HEK293 (cell line): ENCODE measurements at regions of chr1 and their contacts with region 1.

Region 1: GRCh38 chr1:85109475-85109874 is 61.2 kb upstream of the MCOLN3 start:
- H3K4me3 ChIP-seq: no peak overlapping the region
- H3K27ac ChIP-seq: no peak overlapping the region
- H3K4me1 ChIP-seq: no peaks in the 10 kb centered on the region
- CTCF ChIP-seq: peak; percentile 74

Region 2: DNA sequence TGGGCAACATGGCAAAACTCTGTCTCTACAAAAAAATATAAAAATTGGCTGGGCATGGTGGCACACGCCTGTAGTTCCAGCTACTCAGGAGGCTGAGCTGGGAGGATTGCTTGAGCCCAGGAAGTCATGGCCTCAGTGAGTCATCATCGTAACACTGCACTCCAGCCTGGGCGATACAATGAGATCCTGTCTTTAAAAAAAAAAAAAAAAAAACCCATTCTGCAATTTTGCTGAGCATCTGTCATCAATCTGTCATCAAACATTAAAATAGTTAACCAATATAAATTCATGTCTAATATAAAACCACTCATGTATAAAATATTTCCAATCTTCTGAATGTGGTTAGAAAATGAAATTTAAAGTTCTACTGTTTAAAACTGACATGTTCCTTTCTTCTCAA is 273.3 kb before region 1 on chr1:
- CTCF ChIA-PET with region 1: no interaction called
- POLR2A ChIA-PET with region 1: no interaction called
- H3K4me3 ChIP-seq: no peak overlapping the region
- H3K27ac ChIP-seq: no peak overlapping the region
- H3K4me1 ChIP-seq: peaks cover 8% of the 10 kb centered on the region; the same call in 1 of the 2 replicates
- CTCF ChIP-seq: no peak

Region 3: DNA sequence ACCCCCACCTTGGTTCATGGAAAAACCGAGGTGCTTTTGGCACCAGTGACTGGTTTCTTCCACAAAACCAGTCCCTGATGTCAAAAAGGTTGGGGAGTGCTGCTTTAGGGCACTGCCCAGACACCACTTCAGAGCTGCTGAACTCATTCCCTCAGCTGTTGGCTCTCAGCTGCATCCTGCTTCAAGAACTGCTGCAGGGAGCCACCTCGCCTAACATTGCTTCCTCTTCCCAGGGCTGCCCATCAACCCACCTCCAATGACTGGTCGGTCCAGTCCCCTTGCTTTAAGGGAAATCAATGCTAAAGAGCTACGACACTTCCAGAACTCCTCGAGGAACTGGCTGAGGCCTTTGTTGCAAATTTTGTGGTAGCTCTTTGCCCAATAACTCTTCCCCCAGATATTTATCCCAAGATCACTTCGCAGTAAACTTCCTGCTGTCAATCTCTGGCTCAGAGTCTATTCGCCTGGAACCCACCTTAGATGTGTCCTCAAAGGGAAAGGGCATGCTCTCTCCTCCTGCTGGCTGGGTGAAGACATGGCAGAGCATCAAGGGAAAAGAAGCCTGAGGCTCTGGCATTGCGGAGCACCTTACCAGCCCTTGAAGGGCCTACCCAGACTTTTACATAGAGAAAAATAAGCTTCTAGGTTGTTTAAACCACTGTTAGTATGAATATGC is 121.0 kb after region 1 on chr1:
- CTCF ChIA-PET with region 1: interaction called, 18 read pairs
- POLR2A ChIA-PET with region 1: no interaction called
- H3K4me3 ChIP-seq: no peak overlapping the region
- H3K27ac ChIP-seq: no peak overlapping the region
- H3K4me1 ChIP-seq: peaks cover 4% of the 10 kb centered on the region
- CTCF ChIP-seq: no peak

Region 4: DNA sequence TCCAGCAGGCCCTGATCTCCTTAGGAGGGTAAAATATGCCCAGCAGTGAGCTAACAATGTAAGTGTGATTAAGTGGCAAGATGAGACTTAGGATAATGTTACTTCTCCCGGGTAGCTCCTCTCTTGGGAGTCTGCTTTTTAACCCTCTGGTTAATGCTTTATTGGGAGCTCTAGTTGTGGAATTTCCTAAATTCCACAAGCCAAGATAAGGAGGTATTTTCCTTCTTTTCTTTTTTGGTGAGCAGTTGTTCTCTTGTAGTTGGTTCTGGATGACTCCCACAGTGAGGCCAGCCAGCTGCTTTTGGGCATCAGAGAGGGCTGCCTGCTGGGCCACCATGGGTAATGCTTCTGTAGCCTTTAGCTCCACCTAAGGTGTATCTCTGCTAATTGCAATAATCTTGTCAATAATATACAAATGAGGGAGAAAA is 130.7 kb after region 1 on chr1:
- CTCF ChIA-PET with region 1: interaction called, 12 read pairs
- POLR2A ChIA-PET with region 1: no interaction called
- H3K4me3 ChIP-seq: no peak overlapping the region
- H3K27ac ChIP-seq: no peak overlapping the region; the same call in 1 of the 2 replicates
- H3K4me1 ChIP-seq: peaks cover 11% of the 10 kb centered on the region
- CTCF ChIP-seq: peak; percentile 41; the same call in 1 of the 2 replicates